ENCODE measurements at regions of chr3 and their contacts with region 1.

Region 1: DNA sequence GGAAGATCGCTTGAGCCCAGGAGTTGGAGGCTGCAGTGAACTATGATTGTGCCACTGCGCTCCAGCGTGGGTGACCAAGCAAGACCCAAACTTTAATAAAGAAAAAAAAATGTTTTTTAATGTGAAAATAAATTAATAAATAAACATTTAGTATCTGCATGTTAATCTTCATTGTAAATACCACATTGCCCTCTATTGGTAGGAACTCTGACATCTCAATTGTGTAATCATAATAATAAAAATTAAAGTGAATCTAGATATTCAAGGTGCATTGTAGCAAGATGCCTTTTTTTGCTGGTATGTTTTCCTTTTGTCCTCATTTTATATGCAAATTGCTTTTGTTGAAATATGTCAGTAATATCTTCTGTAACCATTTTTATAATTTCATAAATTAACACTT is 95.0 kb upstream of the LIMD1 start:
- DNase-seq: no peak
- H3K4me3 ChIP-seq: no peak overlapping the region
- H3K27ac ChIP-seq: no peak overlapping the region
- H3K4me1 ChIP-seq: no peaks in the 10 kb centered on the region
- H3K27me3 ChIP-seq: no peaks in the 10 kb centered on the region
- CTCF ChIP-seq: peak; percentile 19 to 49 (median 23)

Region 2: GRCh38 chr3:45037734-45038455 is 461.6 kb before region 1 on chr3:
- intact Hi-C with region 1: loop called (anchors 2 kb)
- DNase-seq: peak; percentile 75 to 96
- H3K4me3 ChIP-seq: no peak overlapping the region
- H3K27ac ChIP-seq: no peak overlapping the region
- H3K4me1 ChIP-seq: peaks cover 6 to 15% of the 10 kb centered on the region in 2 donors
- H3K27me3 ChIP-seq: no peaks in the 10 kb centered on the region
- CTCF ChIP-seq: peak; percentile 91 to 95 (median 95)

Region 3: GRCh38 chr3:45224824-45225464 is 274.6 kb before region 1 on chr3:
- intact Hi-C with region 1: loop called (anchors 10 kb)
- DNase-seq: peak in 1 of 2 donors; percentile 78
- H3K4me3 ChIP-seq: peak overlapping the region; percentile 64 to 86
- H3K27ac ChIP-seq: no peak overlapping the region
- H3K4me1 ChIP-seq: peaks cover 2 to 7% of the 10 kb centered on the region in 2 donors
- H3K27me3 ChIP-seq: no peaks in the 10 kb centered on the region
- CTCF ChIP-seq: peak; percentile 21 to 58 (median 35)

Region 4: DNA sequence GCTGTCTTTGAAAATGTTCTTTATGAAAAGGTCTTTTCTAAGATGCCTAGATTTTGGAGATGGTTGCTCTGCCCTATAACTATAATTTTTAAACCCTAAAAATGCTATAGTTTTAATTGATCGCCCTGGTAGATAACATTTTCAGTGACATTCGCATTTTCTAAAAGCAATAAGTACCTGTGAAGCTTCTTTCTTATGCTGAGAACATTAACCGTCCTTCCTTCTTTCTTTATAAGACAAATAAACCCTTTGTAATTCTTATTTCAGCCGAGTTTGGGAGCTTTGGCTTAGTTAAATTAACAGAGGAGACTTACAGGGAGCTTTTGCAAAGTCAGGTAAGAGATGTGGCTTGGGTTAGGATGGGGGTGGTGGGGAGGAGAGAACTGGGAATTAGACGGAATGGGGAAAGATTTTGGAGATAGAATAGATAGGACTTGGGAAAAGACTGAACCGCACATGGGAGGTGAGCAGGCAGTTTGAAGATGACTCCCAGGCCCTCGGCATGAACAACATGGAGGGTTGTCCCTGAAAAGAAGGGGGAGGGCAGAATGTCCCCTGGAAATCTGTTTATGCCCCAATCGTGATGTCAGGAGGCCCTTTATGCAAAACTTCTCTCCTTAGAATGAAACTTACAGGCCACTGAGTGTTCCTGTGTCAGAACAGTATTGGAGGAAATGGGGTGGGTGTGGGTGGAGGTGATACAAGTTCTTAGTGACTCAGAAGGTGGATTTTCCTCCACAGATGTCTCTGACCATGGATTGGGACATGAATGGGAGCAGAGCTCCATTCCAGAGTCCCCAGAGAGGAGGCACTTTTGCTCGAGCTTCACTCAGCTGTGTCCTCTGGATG is 187.4 kb before region 1 on chr3:
- intact Hi-C with region 1: no loop called
- DNase-seq: no peak
- H3K4me3 ChIP-seq: no peak overlapping the region
- H3K27ac ChIP-seq: no peak overlapping the region
- H3K4me1 ChIP-seq: no peaks in the 10 kb centered on the region
- H3K27me3 ChIP-seq: no peaks in the 10 kb centered on the region
- CTCF ChIP-seq: no peak

Region 5: GRCh38 chr3:45381168-45381852 is 118.2 kb before region 1 on chr3:
- intact Hi-C with region 1: no loop called
- DNase-seq: no peak
- H3K4me3 ChIP-seq: no peak overlapping the region
- H3K27ac ChIP-seq: no peak overlapping the region
- H3K4me1 ChIP-seq: no peaks in the 10 kb centered on the region
- H3K27me3 ChIP-seq: no peaks in the 10 kb centered on the region
- CTCF ChIP-seq: no peak

Region 6: GRCh38 chr3:45592830-45593707 is 93.5 kb after region 1 on chr3:
- intact Hi-C with region 1: no loop called
- DNase-seq: peak; percentile 82 to 97
- H3K4me3 ChIP-seq: peak overlapping the region; percentile 81 to 91
- H3K27ac ChIP-seq: peak overlapping the region; percentile 91 to 96
- H3K4me1 ChIP-seq: peaks cover 16 to 25% of the 10 kb centered on the region in 2 donors
- H3K27me3 ChIP-seq: no peaks in the 10 kb centered on the region
- CTCF ChIP-seq: peak; percentile 85 to 88 (median 87)